PC-9 (cell line): ENCODE measurements at regions of chr2 and their contacts with region 1.

Region 1: GRCh38 chr2:150410809-150411208 is 76.7 kb downstream of the RND3 start:
- DNase-seq: peak; percentile 28 to 43
- H3K4me3 ChIP-seq: no peak overlapping the region
- H3K27ac ChIP-seq: no peak overlapping the region
- H3K4me1 ChIP-seq: no peaks in the 10 kb centered on the region
- H3K27me3 ChIP-seq: no peaks in the 10 kb centered on the region
- CTCF ChIP-seq: no peak

Region 2: DNA sequence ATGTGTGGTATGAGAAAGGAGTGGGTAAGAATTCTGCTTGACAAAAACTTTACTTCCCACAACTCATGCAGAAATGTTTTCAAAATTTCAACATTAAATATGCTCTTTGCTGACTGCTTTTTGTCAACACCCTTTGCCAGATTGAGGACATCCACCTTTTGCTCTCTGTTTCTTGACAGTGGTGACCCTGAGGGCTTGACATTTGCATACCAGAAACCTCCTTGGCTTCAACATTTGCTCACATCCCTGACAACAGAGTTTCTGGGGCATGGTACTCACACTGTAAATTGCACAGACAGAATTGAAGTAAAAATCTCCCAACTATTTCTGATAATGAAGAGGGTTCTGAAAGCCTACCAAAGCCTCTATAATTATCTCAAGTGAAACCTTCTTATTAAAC is 19.0 kb before region 1 on chr2:
- CTCF ChIA-PET with region 1: interaction called, 12 read pairs
- POLR2A ChIA-PET with region 1: no interaction called
- intact Hi-C with region 1: no loop called
- DNase-seq: no peak
- H3K4me3 ChIP-seq: no peak overlapping the region
- H3K27ac ChIP-seq: no peak overlapping the region
- H3K4me1 ChIP-seq: no peaks in the 10 kb centered on the region
- H3K27me3 ChIP-seq: no peaks in the 10 kb centered on the region
- CTCF ChIP-seq: no peak